PC-3 (cell line): ENCODE measurements at regions of chr2 and their contacts with region 1.

Region 1: DNA sequence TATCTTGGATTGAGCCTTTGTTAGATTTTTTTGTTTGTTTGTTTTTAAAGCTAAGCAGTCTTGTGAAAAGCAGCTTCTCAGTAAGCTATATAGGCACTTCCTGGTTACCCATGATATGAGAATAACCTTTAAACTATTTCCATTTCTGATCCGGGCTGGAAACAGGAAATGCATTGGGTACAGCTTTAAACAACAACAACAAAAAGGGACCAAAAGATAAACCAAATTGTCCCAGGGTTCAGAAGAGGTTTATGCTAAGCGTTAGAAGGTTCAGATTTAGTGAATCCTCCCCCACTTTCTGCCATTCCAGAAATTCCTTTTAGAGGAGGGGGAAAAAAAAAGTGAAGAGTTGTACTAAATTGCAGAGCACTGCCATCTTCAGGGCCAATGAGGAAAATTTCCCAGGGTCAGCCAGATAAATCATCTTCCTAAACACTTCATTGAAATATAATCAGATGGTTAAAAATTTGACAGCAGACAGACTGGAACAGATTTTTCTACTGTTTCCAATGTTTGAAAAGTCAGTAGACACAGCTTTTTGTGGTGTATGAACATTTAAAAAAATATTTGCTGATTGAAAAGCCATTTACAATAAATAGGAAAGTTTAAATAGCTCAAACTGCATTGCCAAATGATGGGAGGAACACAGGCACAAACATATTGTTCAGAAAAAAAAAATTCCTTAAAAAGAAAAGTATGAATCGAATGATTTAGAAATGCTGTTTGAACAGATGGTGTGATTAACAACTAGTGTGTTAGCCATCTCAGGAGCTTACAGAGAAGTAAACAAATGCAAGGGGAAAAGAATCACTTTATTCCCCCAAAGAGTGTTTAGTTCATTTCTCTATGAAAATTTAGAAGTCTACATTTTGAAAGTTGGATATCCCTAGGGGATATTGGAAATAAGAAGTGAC is 189.9 kb upstream of the TANK start:
- DNase-seq: peak; percentile 87
- ATAC-seq: peak; percentile 70
- H3K4me3 ChIP-seq: peak overlapping the region; percentile 26; the same call in 1 of the 2 replicates
- H3K27ac ChIP-seq: peak overlapping the region; percentile 65
- H3K4me1 ChIP-seq: peaks cover 11% of the 10 kb centered on the region
- H3K27me3 ChIP-seq: no peaks in the 10 kb centered on the region
- CTCF ChIP-seq: peak; percentile 94

Region 2: GRCh38 chr2:160590664-160591063 is 379.6 kb before region 1 on chr2:
- CTCF ChIA-PET with region 1: no interaction called
- POLR2A ChIA-PET with region 1: no interaction called
- intact Hi-C with region 1: loop called (anchors 5 kb)
- DNase-seq: no peak
- ATAC-seq: no peak
- H3K4me3 ChIP-seq: no peak overlapping the region
- H3K27ac ChIP-seq: no peak overlapping the region
- H3K4me1 ChIP-seq: no peaks in the 10 kb centered on the region
- H3K27me3 ChIP-seq: no peaks in the 10 kb centered on the region
- CTCF ChIP-seq: no peak